Heart left ventricle (tissue), 16 donors: ENCODE measurements at regions of chr13 and their contacts with region 1.

Region 1: DNA sequence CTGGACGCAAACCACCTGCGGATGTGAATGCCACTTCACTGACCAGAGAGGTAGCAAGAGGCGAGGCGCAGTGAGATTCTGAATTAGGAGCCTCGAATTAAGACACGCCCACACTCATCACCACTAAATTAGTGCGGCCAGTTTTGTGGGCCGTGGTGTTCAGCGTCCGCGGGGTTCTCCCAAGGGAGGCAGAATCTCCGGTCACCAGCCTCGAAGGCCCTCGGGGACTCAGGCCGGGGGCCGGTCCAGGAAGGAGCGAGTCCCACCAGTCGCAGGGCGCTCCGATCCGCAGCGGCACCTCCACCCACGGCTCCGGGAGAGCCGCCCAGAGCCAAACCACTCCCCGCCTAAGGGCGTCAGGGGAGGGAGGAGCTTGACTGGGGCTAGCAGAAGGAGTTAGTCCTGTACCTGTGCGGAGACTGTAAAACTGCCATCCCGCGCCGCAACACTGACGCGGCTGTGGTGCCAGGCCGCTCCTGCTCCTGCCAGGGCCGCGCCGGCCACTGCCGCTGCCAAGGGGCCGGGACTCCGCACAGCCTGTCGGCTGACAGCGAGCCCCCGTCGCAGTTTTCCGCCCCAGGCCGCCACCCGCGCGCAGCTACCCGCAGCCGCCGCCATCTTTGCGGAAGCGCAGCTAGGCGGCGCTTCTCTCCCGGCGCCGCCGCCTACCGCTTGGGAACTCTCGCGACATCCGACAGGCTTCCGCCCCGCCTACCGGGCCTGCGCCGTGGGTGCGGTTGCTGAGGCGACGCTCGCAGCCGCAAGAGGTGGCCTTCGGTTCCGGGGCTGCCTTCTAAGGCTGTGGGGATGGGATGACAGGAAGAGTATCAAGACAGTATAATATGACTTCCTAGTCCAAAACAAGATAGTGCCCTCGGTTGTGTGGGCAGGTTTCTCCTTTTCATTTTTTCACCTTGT is at the start of gene MICU2:
- DNase-seq: peak; percentile 94 to 97 (median 95)
- ATAC-seq: peak; percentile 94 to 99 (median 99)
- H3K4me3 ChIP-seq: peak within 1 kb of the TSS; percentile 65 to 99 (median 80)
- H3K27ac ChIP-seq: peak within 1 kb of the TSS; percentile 79 to 99 (median 96)
- H3K4me1 ChIP-seq: peaks cover 0 to 29% (median 8%) of the 10 kb centered on the region in 12 donors
- H3K27me3 ChIP-seq: peaks cover 0 to 21% (median 0%) of the 10 kb centered on the region in 9 donors
- CTCF ChIP-seq: peak in 7 of 12 donors; percentile 11 to 48 (median 37)
- POLR2A ChIP-seq: peak in 1 of 2 donors; percentile 92
- total RNA-seq, gene MICU2: 50.4 to 144 (median 59.8) TPM

Region 2: DNA sequence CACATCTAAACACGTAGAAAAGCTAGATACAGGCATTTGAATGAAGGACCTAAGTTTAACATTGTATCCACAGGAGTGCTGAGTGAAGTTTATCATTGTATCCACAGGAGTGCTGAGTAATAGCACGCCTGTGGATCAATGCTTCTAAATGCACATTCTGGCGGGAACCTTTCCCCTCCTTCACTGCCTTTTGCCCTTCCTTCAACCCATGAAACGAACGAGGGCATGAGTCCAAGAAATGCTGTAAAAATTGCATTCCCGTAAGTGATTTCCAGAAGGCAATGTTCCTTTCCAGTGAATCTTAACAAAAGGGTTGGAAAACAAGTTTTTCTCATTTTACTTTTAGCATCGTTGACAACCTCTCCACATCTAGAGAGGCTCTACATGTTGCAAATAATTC is 232.8 kb before region 1 on chr13:
- intact Hi-C with region 1: no loop called
- DNase-seq: no peak
- ATAC-seq: no peak
- H3K4me3 ChIP-seq: no peak overlapping the region
- H3K27ac ChIP-seq: no peak overlapping the region
- H3K4me1 ChIP-seq: no peaks in the 10 kb centered on the region
- H3K27me3 ChIP-seq: no peaks in the 10 kb centered on the region
- CTCF ChIP-seq: no peak
- POLR2A ChIP-seq: no peak

Region 3: DNA sequence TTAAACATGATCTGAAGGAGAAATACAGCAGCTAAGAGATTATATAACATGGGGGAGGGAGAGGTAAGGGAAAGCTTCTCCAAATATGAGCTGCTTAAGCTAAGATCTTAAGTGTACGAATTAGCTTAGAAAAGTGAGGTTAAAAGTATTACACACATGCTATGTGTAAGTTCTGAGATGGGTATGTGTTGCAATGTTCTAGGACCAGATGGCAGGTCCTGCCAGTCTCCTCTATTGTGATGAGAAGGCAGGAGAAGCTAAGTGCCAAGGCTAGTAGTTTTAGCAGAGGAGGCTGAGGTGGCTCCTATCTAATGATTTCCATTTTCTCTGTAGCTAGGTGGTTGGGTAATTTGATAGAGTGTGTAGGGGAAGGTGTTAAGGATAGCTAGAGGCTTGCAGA is 57.4 kb before region 1 on chr13:
- intact Hi-C with region 1: loop called in 1 of 10 experiments (anchors 10 kb)
- DNase-seq: no peak
- ATAC-seq: peak in 1 of 4 donors; percentile 34
- H3K4me3 ChIP-seq: no peak overlapping the region
- H3K27ac ChIP-seq: no peak overlapping the region
- H3K4me1 ChIP-seq: peaks cover 0 to 26% (median 3%) of the 10 kb centered on the region in 12 donors
- H3K27me3 ChIP-seq: no peaks in the 10 kb centered on the region
- CTCF ChIP-seq: no peak
- POLR2A ChIP-seq: no peak